Activated T-helper 1 cell treated with anti-CD3 and anti-CD28 coated beads, Interleukin-12 subunit alpha, Interleukin-12 subunit beta, Interleukin-2, Interleukin-4 antibody, amounts not matched to agents 30 ng/mL and 10 ng/mL and 1 ng/mL, durations not matched to agents 14 hours and 24 hours and 36 hours (primary cell): ENCODE measurements at regions of chr1 and their contacts with region 1.

Region 1: GRCh38 chr1:186304982-186305949 is 69.8 kb downstream of the TPR start:
- DNase-seq: no peak
- H3K4me3 Mint-ChIP-seq: peak overlapping the region; percentile 48
- H3K27ac Mint-ChIP-seq: peak overlapping the region; percentile 86
- H3K4me1 Mint-ChIP-seq: peaks cover 58% of the 10 kb centered on the region
- H3K27me3 Mint-ChIP-seq: no peaks in the 10 kb centered on the region

Region 2: DNA sequence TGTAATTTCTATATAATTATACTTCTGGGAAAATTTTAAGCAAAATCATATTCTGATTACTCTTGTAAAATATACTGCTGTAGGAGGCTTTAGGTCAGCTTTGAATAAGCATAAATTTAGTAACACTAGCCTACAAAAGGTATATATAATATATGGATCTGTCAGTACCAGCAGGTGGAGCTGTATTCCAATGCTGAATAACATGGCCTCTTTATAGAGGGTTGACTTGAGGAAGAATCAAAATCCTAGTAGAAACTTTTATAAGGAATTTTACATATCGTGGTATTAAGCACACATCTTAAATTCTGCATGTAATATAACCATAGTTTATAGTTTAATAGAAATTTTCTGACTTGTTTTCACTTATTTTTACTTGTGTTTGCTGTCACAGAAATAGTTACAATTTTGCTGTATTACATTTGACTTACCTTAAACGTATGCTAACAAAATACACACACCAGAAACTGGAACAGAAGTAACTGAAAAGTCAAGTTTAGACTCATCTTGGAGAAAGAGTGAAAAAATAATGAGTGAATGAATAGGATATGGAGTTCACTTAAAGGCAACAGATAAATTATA is 491.8 kb before region 1 on chr1:
- intact Hi-C with region 1: no loop called
- DNase-seq: no peak
- H3K4me3 Mint-ChIP-seq: no peak overlapping the region
- H3K27ac Mint-ChIP-seq: no peak overlapping the region
- H3K4me1 Mint-ChIP-seq: no peaks in the 10 kb centered on the region
- H3K27me3 Mint-ChIP-seq: peaks cover 3% of the 10 kb centered on the region

Region 3: DNA sequence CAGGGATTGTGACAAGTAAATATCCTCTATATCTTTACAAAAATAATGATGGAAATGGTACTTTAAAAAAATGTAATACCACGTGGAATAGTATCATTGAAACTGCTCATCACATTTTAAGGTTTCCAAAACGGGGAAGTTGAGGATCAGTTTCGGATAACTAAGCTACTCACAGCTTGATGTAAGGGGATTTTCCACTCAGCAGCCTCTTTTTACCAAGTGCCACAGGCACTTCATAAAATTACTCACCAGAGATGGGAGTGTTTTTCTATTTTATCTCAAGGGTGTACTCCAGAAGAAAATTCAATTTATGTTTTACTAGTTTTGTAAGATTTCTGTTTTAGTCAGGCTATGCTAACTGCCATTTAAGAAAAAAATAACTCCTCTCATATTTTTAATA is 21.9 kb before region 1 on chr1:
- intact Hi-C with region 1: loop called (anchors 1 kb)
- DNase-seq: no peak
- H3K4me3 Mint-ChIP-seq: peak overlapping the region; percentile 72
- H3K27ac Mint-ChIP-seq: peak overlapping the region; percentile 92
- H3K4me1 Mint-ChIP-seq: peaks cover 63% of the 10 kb centered on the region
- H3K27me3 Mint-ChIP-seq: no peaks in the 10 kb centered on the region

Region 4: GRCh38 chr1:186289943-186290545 is 15.2 kb before region 1 on chr1:
- intact Hi-C with region 1: loop called (anchors 1 kb)
- DNase-seq: no peak
- H3K4me3 Mint-ChIP-seq: peak overlapping the region; percentile 59
- H3K27ac Mint-ChIP-seq: peak overlapping the region; percentile 91
- H3K4me1 Mint-ChIP-seq: peaks cover 82% of the 10 kb centered on the region
- H3K27me3 Mint-ChIP-seq: no peaks in the 10 kb centered on the region

Region 5: GRCh38 chr1:186337554-186337953 is 32.3 kb after region 1 on chr1:
- intact Hi-C with region 1: no loop called
- DNase-seq: no peak
- H3K4me3 Mint-ChIP-seq: no peak overlapping the region
- H3K27ac Mint-ChIP-seq: no peak overlapping the region
- H3K4me1 Mint-ChIP-seq: peaks cover under 1% of the 10 kb centered on the region
- H3K27me3 Mint-ChIP-seq: no peaks in the 10 kb centered on the region